PC-9 (cell line): ENCODE measurements at regions of chr2 and their contacts with region 1.

Region 1: DNA sequence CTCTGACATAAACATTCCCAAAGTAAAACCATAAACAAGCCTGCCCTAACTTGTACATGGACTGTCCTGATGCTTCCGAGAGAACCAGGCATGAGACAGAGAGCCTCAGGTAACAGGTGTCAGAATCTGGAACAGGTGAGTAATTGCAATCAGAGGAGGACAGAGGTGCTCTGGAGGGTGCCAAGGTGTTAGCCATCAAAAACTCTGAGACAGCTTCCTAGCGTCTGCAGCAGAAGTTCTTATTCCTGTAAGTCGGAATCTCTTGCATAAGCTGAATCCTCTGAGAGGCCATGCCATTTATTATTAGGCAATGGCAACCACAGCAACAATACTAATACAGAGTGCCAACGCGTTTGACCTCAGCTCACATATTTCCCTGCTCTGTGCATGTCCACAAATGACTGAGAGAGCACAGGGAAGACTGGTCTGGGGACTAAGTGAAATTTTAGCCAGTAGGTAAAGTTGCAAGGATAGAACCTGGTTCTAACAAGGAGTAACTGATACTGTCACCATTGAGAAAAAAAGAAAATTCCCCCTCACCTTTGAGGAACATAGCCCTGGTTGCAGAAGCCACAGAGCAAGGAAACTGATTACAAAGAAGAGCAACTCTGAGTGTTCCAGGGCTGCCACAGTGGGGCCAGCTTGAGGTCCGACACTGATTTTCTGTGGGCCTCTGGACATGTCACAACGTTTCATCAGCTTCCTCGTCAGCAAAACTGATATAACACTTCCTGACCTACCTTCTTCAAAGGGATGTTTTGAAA is 55.1 kb upstream of the ACSL3 start:
- DNase-seq: peak in 1 of 2 experiments; percentile 96
- H3K4me3 ChIP-seq: peak overlapping the region; percentile 19; the same call in 1 of the 2 replicates
- H3K27ac ChIP-seq: peak overlapping the region; percentile 79
- H3K4me1 ChIP-seq: peaks cover 30% of the 10 kb centered on the region
- H3K27me3 ChIP-seq: no peaks in the 10 kb centered on the region
- CTCF ChIP-seq: no peak

Region 2: DNA sequence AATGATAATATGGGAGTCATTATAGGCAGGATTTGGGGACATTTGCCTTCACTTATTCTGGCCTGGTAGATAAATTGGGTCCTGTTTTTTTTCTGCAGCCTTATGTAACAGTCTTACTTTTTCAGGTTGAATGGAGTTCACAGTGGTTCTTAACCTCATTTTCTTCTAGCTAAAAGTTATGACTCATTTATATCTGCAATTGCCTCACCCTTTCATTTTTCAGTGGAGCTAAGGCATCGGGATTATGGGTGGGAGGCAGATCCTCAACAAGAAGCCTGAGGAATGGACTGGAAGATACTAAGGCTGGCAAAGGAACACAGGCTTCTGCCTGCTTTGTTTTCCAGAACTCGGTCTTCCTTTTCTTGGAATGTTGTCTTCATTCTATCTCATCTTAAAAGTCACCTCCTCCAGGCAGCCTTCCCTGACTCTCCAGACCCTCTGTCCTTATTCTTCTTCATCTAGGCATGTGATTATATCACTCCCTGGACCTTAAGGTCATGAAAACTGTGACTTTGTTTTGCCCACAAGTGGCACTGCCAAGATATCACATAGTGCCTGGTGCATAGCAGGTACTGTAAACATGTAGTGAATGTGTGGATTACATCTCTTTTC is 14.1 kb after region 1 on chr2:
- CTCF ChIA-PET with region 1: no interaction called
- POLR2A ChIA-PET with region 1: no interaction called
- intact Hi-C with region 1: loop called (anchors 1 kb)
- DNase-seq: peak in 1 of 2 experiments; percentile 84
- H3K4me3 ChIP-seq: no peak overlapping the region
- H3K27ac ChIP-seq: peak overlapping the region; percentile 36
- H3K4me1 ChIP-seq: peaks cover 17% of the 10 kb centered on the region
- H3K27me3 ChIP-seq: no peaks in the 10 kb centered on the region
- CTCF ChIP-seq: no peak

Region 3: DNA sequence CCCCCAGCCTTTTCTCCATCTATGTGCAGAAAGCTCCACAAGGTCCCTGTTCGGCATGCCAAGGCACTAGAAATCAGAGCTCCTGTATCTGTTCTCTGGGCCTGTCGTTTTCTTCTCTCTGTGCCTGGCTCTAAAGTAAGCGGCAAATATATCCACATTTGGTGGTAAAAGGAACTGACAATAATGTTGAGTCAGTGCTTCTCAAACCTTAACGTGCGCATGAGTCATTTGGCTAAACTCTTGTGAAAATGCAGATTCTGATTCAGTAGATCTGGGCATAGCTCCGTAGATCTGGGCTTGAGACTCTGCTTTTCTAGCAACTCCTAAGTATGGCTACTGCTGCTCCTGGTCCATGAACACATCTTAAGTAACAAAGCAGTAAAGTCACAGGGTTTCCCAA is 38.6 kb after region 1 on chr2:
- CTCF ChIA-PET with region 1: no interaction called
- POLR2A ChIA-PET with region 1: no interaction called
- intact Hi-C with region 1: loop called (anchors 5 kb)
- DNase-seq: peak in 1 of 2 experiments; percentile 79
- H3K4me3 ChIP-seq: peak overlapping the region; percentile 6; the same call in 1 of the 2 replicates
- H3K27ac ChIP-seq: peak overlapping the region; percentile 64
- H3K4me1 ChIP-seq: peaks cover 88% of the 10 kb centered on the region
- H3K27me3 ChIP-seq: no peaks in the 10 kb centered on the region
- CTCF ChIP-seq: no peak